Motor neuron (in vitro differentiated cells): ENCODE measurements at regions of chr4 and their contacts with region 1.

Region 1: DNA sequence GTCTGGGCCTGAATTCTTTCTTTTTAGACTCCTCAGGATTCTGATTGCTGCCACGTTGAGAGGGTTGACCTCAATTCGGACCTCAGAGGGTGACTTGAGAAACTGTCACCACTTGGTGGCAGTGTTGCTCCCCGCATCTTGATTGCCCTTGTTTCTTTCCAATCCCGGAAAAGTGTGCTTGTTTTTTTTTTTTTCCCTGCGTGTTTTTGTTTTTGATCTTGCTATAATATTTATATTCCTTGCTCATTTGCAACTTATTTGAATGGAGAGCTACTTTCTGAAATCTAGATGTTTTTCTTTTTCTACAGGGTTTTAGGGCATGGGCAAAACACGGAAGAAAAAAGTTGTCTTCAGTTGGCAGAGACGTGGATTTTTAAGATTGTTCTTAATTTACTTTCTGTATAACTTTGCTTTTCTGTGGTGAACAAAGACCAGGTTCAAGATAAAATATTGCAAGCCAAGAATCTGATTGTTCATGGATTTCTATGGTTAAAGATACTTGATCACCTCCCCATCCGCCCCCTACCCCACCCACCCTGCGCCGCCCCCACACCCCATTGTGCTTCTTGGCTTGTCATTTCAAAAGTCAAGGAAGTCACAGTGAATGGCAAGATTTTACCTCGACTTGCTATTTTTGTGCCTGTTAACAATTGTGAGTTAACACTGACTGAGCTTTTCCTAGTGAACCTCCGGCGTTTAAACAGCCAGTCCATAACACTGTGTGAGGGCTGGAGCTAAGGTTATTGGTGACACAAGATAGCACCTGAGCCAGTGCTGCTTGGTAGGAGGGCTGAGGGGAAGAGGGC is 102.1 kb downstream of the PTTG2 start:
- ATAC-seq: peak; percentile 61 to 90 (median 74)
- H3K4me3 ChIP-seq: no peak overlapping the region
- H3K27ac ChIP-seq: no peak overlapping the region
- H3K4me1 ChIP-seq: peaks cover 2 to 8% of the 10 kb centered on the region in 2 donors

Region 2: DNA sequence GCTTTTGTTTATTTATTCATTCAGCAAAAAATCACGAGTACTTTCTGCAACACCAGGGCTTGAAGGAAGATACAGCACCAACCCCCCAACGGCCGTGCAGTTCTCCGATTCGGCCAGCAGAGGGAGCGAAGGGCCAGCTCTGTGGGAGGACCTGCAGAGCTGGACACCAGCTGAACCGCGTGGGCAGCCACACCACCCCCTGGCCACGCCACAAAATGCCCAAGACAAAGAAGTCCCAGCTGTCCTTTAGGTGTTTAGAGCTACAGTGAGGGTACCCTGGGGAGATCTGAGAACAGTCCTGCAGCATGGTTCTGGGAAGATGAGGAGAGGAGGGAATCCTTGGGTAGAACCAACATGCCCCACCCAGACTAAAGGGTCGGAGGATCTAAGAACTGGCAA is 459.2 kb before region 1 on chr4:
- in situ Hi-C with region 1: no loop called
- ATAC-seq: peak; percentile 75 to 97 (median 90)
- H3K4me3 ChIP-seq: no peak overlapping the region
- H3K27ac ChIP-seq: no peak overlapping the region
- H3K4me1 ChIP-seq: no peaks in the 10 kb centered on the region

Region 3: GRCh38 chr4:38290366-38290765 is 228.1 kb after region 1 on chr4:
- in situ Hi-C with region 1: no loop called
- ATAC-seq: peak in 1 of 8 experiments; percentile 16
- H3K4me3 ChIP-seq: no peak overlapping the region
- H3K27ac ChIP-seq: no peak overlapping the region
- H3K4me1 ChIP-seq: peaks cover 21 to 22% of the 10 kb centered on the region in 2 donors

Region 4: GRCh38 chr4:38663801-38664705 is 601.8 kb after region 1 on chr4 and contains the start of gene KLF3:
- in situ Hi-C with region 1: loop called in 1 of 9 experiments (anchors 25 kb)
- ATAC-seq: peak; percentile 58 to 81 (median 76)
- H3K4me3 ChIP-seq: peak within 1 kb of the TSS; percentile 64 to 86 (median 79)
- H3K27ac ChIP-seq: peak within 1 kb of the TSS; percentile 94 to 96
- H3K4me1 ChIP-seq: peaks cover 18 to 24% of the 10 kb centered on the region in 2 donors
- total RNA-seq, gene KLF3: 16.2 to 70.0 (median 26.2) TPM

Region 5: DNA sequence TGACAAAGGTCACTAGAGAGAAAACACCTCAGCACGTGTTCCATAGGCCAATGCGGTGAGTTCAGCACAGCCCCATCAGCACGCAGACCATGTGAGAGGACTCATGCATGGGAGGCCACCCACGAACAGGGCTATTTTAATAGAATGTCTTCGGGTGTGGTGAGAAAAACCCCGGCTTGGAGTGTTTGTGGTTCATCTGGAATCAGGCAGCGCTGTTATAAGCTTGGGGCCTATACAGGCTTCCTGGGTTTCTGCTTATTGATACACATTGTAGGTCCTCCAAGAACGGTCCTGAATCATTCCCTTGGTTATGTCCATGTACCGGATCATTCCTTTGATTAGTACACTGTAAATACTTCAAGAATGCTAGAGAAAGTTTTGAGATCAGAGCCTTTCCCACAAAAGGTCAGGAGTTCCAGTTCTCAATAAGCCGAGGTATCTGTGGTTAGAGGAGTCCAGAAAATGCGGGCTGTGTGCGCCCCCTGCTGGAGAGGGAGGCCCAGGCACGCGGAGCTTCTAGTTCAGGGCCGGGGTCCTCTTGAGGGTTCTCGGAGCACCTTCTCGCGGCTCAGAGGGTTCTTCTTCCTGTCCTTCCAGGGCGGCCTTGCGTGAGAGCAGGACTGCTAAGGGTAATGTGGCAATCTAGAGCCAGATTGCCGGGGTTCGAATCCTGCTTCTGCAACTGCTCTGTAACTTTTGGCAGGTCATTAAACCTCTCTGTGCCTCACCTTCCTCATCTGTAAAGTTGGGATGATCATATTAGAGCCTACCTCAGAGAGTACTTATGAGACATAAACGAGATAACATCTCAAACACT is 668.7 kb after region 1 on chr4:
- in situ Hi-C with region 1: loop called in 3 of 9 experiments (anchors 10 to 25 kb)
- ATAC-seq: peak; percentile 3 to 92 (median 68)
- H3K4me3 ChIP-seq: no peak overlapping the region
- H3K27ac ChIP-seq: no peak overlapping the region
- H3K4me1 ChIP-seq: no peaks in the 10 kb centered on the region